Activated B cell treated with CpG ODN at 0.5 μM for 24 hours (primary cell): ENCODE measurements at regions of chr14 and their contacts with region 1.

Region 1: DNA sequence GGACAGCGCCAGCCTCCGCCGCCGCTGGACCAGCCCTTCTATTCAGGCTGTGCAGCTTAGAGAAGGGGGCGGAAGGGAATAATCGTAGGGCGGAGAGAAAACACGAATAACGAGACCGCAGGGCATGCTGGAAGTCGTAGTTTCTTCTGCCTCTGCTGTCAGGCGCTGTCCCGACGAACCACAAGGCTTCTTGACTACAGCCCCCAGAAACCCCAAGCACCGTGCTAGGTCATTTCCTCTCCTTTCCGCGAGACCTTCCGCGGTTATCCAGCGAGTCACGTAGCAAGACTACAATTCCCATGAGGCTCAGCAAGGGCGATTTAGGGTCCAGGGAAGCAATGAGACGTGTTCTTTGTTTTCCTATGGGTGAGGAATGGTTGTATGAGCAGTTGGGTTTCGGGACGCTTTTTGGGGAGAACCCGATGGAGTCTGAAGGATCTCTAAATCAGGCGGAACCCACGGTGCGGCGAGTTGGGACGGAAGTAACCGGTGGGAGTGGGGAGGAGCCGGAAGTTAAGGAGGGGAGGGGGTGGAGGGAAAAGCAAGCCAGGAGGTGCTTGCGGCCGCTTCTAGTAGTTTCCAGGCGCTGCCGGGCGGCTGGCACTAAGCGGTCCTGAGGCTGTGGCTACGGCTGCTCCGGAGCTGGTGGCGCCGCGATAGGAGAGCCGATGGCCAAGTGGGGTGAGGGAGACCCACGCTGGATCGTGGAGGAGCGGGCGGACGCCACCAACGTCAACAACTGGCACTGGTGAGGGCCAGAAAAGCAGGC is at the starts of genes AHSA1 and VIPAS39:
- DNase-seq: peak; percentile 79
- ATAC-seq: peak; percentile 93
- H3K4me3 Mint-ChIP-seq: peak within 1 kb of the TSS; percentile 100
- H3K27ac Mint-ChIP-seq: peak within 1 kb of the TSS; percentile 100
- H3K4me1 Mint-ChIP-seq: peaks cover 30% of the 10 kb centered on the region
- H3K27me3 Mint-ChIP-seq: no peaks in the 10 kb centered on the region
- CTCF ChIP-seq: no peak
- total RNA-seq, gene AHSA1: 169 and 175 TPM in 2 replicates
- total RNA-seq, gene VIPAS39: 15.1 and 15.3 TPM in 2 replicates

Region 2: DNA sequence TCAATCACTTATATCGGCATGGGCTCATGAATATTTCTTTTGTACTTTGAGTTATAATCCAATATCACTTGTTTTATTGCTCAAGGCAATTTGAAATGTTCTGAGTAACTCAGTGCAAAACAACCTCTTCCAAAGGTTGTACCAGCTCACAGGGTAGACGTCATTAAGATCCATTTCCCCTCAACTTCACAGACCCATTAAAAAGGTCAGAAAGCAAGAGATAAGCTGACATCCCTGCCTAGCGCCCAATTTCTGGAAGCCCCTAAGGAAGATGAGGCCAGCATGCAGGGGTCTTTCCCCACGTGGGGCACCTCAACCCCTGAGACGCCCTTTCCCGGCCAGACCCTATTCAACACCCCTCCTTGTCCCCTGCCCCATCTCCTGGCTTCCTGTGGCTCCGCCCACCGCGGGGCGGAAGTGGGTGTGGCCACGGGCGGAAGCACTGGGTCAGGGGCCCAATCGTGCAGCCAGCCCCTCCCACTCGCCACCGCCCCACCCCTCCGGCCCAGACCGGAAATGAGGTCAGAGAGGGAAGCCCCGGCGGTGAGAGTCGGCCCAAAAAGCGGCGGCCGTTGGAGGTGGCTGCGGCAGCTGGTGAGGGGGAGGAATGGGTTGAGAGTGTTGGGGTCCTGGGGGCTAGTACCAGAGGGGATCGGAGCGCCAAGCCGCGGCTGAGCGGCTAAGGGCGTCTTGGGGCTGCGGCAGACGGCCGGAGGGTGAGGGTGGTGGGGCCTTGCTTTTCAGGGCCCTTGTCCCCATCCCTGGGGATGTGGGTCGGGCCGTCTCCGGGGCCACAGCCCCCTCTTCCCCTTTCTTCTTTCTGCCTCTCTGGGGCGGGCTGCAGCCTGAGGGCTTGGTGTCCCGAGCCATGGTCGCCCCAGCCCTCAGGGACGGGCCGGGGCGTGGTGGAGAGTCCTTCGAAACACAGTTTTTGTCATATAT is 1306.0 kb before region 1 on chr14 and contains the start of gene GPATCH2L:
- CTCF ChIA-PET with region 1: no interaction called
- POLR2A ChIA-PET with region 1: no interaction called
- intact Hi-C with region 1: loop called (anchors 10 kb)
- DNase-seq: peak; percentile 97
- ATAC-seq: peak; percentile 93
- H3K4me3 Mint-ChIP-seq: peak within 1 kb of the TSS; percentile 97
- H3K27ac Mint-ChIP-seq: peak within 1 kb of the TSS; percentile 94
- H3K4me1 Mint-ChIP-seq: peaks cover 53% of the 10 kb centered on the region
- H3K27me3 Mint-ChIP-seq: no peaks in the 10 kb centered on the region
- CTCF ChIP-seq: no peak
- total RNA-seq, gene GPATCH2L: 64.8 and 82.3 TPM in 2 replicates

Region 3: DNA sequence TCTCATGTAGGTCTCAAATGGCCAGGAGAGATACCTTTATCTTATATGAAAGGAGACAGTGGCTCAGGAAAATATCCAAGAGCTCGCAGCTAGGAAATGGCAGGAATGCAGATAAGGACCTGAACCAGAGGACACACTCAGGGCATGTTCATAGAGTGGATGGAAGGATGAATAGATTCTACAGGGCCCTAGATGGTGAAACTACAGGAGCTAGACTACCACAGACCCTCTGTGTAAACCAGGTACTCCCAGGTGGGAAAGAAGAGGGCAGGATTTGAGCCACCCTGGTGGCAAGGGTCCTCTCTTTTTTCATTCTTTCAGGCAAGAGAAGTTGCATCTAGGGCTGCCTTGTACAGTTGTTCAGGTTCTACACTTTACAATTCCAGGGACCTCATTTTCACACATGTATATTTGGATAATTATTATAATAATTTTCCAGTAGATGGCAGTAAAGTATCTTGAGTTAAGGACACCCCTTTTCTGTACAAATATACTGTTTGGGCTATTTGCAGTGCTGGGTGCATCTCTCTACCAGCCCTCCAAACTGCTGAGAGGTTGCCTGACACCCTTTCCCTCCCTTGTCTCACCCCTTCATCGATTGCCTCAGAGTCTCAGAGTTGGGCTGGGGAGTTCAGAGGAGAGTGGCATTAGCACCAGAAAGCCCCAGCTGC is 305.7 kb before region 1 on chr14:
- CTCF ChIA-PET with region 1: no interaction called
- POLR2A ChIA-PET with region 1: no interaction called
- intact Hi-C with region 1: loop called (anchors 2 kb)
- DNase-seq: no peak
- ATAC-seq: peak; percentile 45
- H3K4me3 Mint-ChIP-seq: no peak overlapping the region
- H3K27ac Mint-ChIP-seq: no peak overlapping the region
- H3K4me1 Mint-ChIP-seq: no peaks in the 10 kb centered on the region
- H3K27me3 Mint-ChIP-seq: peaks cover 33% of the 10 kb centered on the region
- CTCF ChIP-seq: no peak

Region 4: GRCh38 chr14:77376771-77377501 is 80.8 kb before region 1 on chr14 and contains the starts of genes SAMD15 and TMED8:
- CTCF ChIA-PET with region 1: no interaction called
- POLR2A ChIA-PET with region 1: interaction called, 15 read pairs
- intact Hi-C with region 1: loop called (anchors 1 kb)
- DNase-seq: peak; percentile 85
- ATAC-seq: peak; percentile 89
- H3K4me3 Mint-ChIP-seq: peak within 1 kb of the TSS; percentile 93
- H3K27ac Mint-ChIP-seq: peak within 1 kb of the TSS; percentile 93
- H3K4me1 Mint-ChIP-seq: peaks cover 39% of the 10 kb centered on the region
- H3K27me3 Mint-ChIP-seq: no peaks in the 10 kb centered on the region
- CTCF ChIP-seq: no peak
- total RNA-seq, gene SAMD15: 0.71 and 1.00 TPM in 2 replicates
- total RNA-seq, gene TMED8: 29.9 and 31.3 TPM in 2 replicates

Region 5: GRCh38 chr14:77508249-77508648 is 50.5 kb after region 1 on chr14:
- CTCF ChIA-PET with region 1: no interaction called
- POLR2A ChIA-PET with region 1: no interaction called
- intact Hi-C with region 1: no loop called
- DNase-seq: no peak
- ATAC-seq: no peak
- H3K4me3 Mint-ChIP-seq: no peak overlapping the region
- H3K27ac Mint-ChIP-seq: no peak overlapping the region
- H3K4me1 Mint-ChIP-seq: no peaks in the 10 kb centered on the region
- H3K27me3 Mint-ChIP-seq: no peaks in the 10 kb centered on the region
- CTCF ChIP-seq: no peak

Region 6: DNA sequence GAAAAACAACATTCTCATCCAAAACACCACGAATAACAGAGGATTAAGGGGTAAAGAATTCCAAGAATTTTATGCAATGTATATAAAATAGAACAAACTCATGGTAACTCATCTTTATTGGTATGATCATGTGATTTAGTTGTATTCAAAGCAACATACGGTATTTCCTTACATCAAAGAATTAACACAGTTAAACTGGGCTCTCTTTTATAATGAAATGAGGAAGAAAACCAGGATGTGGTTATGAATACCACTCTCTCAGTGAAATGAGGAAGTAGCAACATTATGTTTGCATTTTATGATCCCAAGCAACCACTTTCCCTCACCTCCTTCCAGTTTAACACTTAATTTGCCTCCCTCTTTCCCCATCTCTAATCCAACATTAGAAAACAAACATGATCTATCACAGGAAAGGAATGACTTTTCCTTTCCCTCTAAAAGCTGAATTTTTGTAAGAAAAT is 135.8 kb after region 1 on chr14:
- CTCF ChIA-PET with region 1: no interaction called
- POLR2A ChIA-PET with region 1: no interaction called
- intact Hi-C with region 1: loop called (anchors 1 kb)
- DNase-seq: no peak
- ATAC-seq: peak; percentile 72
- H3K4me3 Mint-ChIP-seq: peak overlapping the region; percentile 78
- H3K27ac Mint-ChIP-seq: peak overlapping the region; percentile 95
- H3K4me1 Mint-ChIP-seq: peaks cover 90% of the 10 kb centered on the region
- H3K27me3 Mint-ChIP-seq: no peaks in the 10 kb centered on the region
- CTCF ChIP-seq: no peak

Region 7: DNA sequence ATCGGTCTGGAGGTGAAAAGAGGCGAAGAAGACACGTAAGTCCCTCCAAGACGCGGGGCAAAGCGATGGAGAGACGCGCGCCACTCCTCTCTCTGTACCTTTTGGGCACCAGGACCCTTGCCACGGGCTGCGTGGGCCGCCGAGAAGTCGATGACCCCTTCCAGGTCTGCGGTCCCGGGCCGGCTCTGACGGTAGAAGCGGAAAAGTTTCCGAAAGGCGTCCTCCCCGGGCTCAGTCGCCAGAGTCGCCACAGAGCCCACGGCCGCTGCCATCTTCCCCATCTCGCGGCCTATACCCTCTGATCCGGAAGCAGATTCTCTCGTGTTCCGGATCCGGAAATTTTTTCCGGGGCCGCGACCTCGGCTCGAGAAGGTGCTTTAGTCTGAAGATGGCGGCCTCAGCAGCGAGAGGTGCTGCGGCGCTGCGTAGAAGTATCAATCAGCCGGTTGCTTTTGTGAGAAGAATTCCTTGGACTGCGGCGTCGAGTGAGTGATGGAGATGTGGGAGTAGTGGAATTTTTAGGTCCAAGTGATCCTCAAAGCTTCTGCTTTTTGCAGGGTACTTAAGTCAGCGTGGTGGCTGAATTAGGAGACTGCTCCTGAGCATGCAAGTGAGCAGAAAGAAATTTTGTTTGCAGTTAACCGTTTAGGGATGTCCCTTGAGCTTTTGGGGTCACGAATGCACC is 250.2 kb after region 1 on chr14 and contains the starts of genes ALKBH1 and SLIRP:
- CTCF ChIA-PET with region 1: no interaction called
- POLR2A ChIA-PET with region 1: interaction called, 3 read pairs
- intact Hi-C with region 1: loop called (anchors 1 kb)
- DNase-seq: peak; percentile 73
- ATAC-seq: peak; percentile 98
- H3K4me3 Mint-ChIP-seq: peak within 1 kb of the TSS; percentile 96
- H3K27ac Mint-ChIP-seq: peak within 1 kb of the TSS; percentile 91
- H3K4me1 Mint-ChIP-seq: peaks cover 45% of the 10 kb centered on the region
- H3K27me3 Mint-ChIP-seq: no peaks in the 10 kb centered on the region
- CTCF ChIP-seq: no peak
- total RNA-seq, gene ALKBH1: 14.4 and 18.0 TPM in 2 replicates
- total RNA-seq, gene SLIRP: 58.6 and 61.7 TPM in 2 replicates